ENCODE measurements at regions of chr16 and their contacts with region 1.

Region 1: GRCh38 chr16:29973384-29974246 is at the start of gene TAOK2:
- DNase-seq: peak; percentile 99 to 100
- ATAC-seq: peak; percentile 91 to 98
- H3K4me3 ChIP-seq: peak within 1 kb of the TSS; percentile 67
- H3K27ac ChIP-seq: peak within 1 kb of the TSS; percentile 90 to 98
- H3K4me1 ChIP-seq: peaks cover 19% of the 10 kb centered on the region
- CTCF ChIP-seq: no peak
- EP300 ChIP-seq: no peak
- POLR2A ChIP-seq: peak; percentile 96
- RAD21 ChIP-seq: peak in 1 of 2 experiments; percentile 16; a peak in 1 of 5 replicates
- polyA plus RNA-seq, gene TAOK2: 13.7 TPM in 2 replicates

Region 2: GRCh38 chr16:29900102-29900887 is 73.3 kb before region 1 on chr16 and contains the start of gene ASPHD1:
- CTCF ChIA-PET with region 1: interaction called, 3 read pairs
- POLR2A ChIA-PET with region 1: interaction called, 12 read pairs
- DNase-seq: peak; percentile 77 to 87
- ATAC-seq: peak; percentile 73 to 79
- H3K4me3 ChIP-seq: peak within 1 kb of the TSS; percentile 68
- H3K27ac ChIP-seq: peak within 1 kb of the TSS; percentile 80 to 88
- H3K4me1 ChIP-seq: peaks cover 16% of the 10 kb centered on the region
- CTCF ChIP-seq: no peak
- EP300 ChIP-seq: no peak
- POLR2A ChIP-seq: no peak; the same call in 1 of the 2 replicates
- RAD21 ChIP-seq: no peak
- polyA plus RNA-seq, gene ASPHD1: 3.7 and 4.6 TPM in 2 replicates

Region 3: GRCh38 chr16:29943846-29944669 is 29.6 kb before region 1 on chr16:
- CTCF ChIA-PET with region 1: interaction called, 6 read pairs
- POLR2A ChIA-PET with region 1: interaction called, 27 read pairs
- DNase-seq: peak; percentile 85 to 99
- ATAC-seq: peak; percentile 98 to 99
- H3K4me3 ChIP-seq: peak overlapping the region; percentile 14
- H3K27ac ChIP-seq: peak overlapping the region; percentile 92 to 94
- H3K4me1 ChIP-seq: peaks cover 26% of the 10 kb centered on the region
- CTCF ChIP-seq: peak; percentile 64
- EP300 ChIP-seq: no peak; a peak in 1 of 5 replicates
- POLR2A ChIP-seq: peak; percentile 31
- RAD21 ChIP-seq: peak; percentile 47 to 56

Region 4: GRCh38 chr16:29961479-29962343 is 11.9 kb before region 1 on chr16 and contains the start of gene TMEM219:
- CTCF ChIA-PET with region 1: interaction called, 18 read pairs
- POLR2A ChIA-PET with region 1: interaction called, 9 read pairs
- DNase-seq: peak; percentile 88 to 94
- ATAC-seq: peak; percentile 96 to 97
- H3K4me3 ChIP-seq: peak within 1 kb of the TSS; percentile 74
- H3K27ac ChIP-seq: peak within 1 kb of the TSS; percentile 86 to 96
- H3K4me1 ChIP-seq: peaks cover 12% of the 10 kb centered on the region; the same call in 1 of the 3 replicates
- CTCF ChIP-seq: no peak; the same call in 1 of the 3 replicates
- EP300 ChIP-seq: no peak
- POLR2A ChIP-seq: peak; percentile 53
- RAD21 ChIP-seq: peak in 1 of 2 experiments; percentile 47; a peak in 4 of 5 replicates
- polyA plus RNA-seq, gene TMEM219: 65.1 and 82.5 TPM in 2 replicates

Region 5: GRCh38 chr16:30075507-30076275 is 102.1 kb after region 1 on chr16 and contains the start of gene PPP4C:
- CTCF ChIA-PET with region 1: no interaction called
- POLR2A ChIA-PET with region 1: no interaction called
- DNase-seq: peak; percentile 91 to 98
- ATAC-seq: peak; percentile 93 to 98
- H3K4me3 ChIP-seq: peak within 1 kb of the TSS; percentile 100
- H3K27ac ChIP-seq: peak within 1 kb of the TSS; percentile 97 to 98
- H3K4me1 ChIP-seq: peaks cover 18% of the 10 kb centered on the region
- CTCF ChIP-seq: no peak
- EP300 ChIP-seq: no peak
- POLR2A ChIP-seq: peak; percentile 83
- RAD21 ChIP-seq: no peak
- polyA plus RNA-seq, gene PPP4C: 102 and 117 TPM in 2 replicates